ENCODE measurements at regions of chr4 and their contacts with region 1.

Region 1: GRCh38 chr4:122732329-122733026 is at the start of gene BBS12:
- DNase-seq: peak; percentile 100
- H3K4me3 ChIP-seq: peak within 1 kb of the TSS; percentile 62 to 84 (median 82)
- H3K27ac ChIP-seq: peak within 1 kb of the TSS; percentile 83
- H3K4me1 ChIP-seq: peaks cover 7% of the 10 kb centered on the region
- H3K27me3 ChIP-seq: no peaks in the 10 kb centered on the region
- CTCF ChIP-seq: peak; percentile 34 to 62
- POLR2A ChIP-seq: no peak
- total RNA-seq, gene BBS12: 2.1 and 2.3 TPM in 2 replicates

Region 2: GRCh38 chr4:122922877-122923511 is 190.5 kb after region 1 on chr4:
- CTCF ChIA-PET with region 1: interaction called, 5 read pairs
- POLR2A ChIA-PET with region 1: no interaction called
- dilution Hi-C with region 1: no loop called
- intact Hi-C with region 1: loop called (anchors 2 kb)
- DNase-seq: peak; percentile 92
- H3K4me3 ChIP-seq: peak overlapping the region; percentile 75 to 90 (median 81)
- H3K27ac ChIP-seq: peak overlapping the region; percentile 26
- H3K4me1 ChIP-seq: peaks cover 18% of the 10 kb centered on the region
- H3K27me3 ChIP-seq: no peaks in the 10 kb centered on the region
- CTCF ChIP-seq: no peak
- POLR2A ChIP-seq: peak; percentile 41

Region 3: GRCh38 chr4:123037804-123038203 is 305.3 kb after region 1 on chr4:
- CTCF ChIA-PET with region 1: no interaction called
- POLR2A ChIA-PET with region 1: no interaction called
- dilution Hi-C with region 1: no loop called
- intact Hi-C with region 1: no loop called
- DNase-seq: no peak
- H3K4me3 ChIP-seq: no peak overlapping the region
- H3K27ac ChIP-seq: no peak overlapping the region
- H3K4me1 ChIP-seq: no peaks in the 10 kb centered on the region
- H3K27me3 ChIP-seq: no peaks in the 10 kb centered on the region
- CTCF ChIP-seq: no peak
- POLR2A ChIP-seq: no peak

Measured in endothelial cell of umbilical vein (primary cell).